Naive thymus-derived CD4-positive, alpha-beta T cell (primary cell): ENCODE measurements at regions of chrX and their contacts with region 1.

Region 1: GRCh38 chrX:47384502-47384901 is 14.1 kb downstream of the ZNF157 start:
- DNase-seq: peak; percentile 27 to 83 (median 67)
- ATAC-seq: peak; percentile 86
- H3K4me3 ChIP-seq: no peak overlapping the region
- H3K4me3 Mint-ChIP-seq: peak overlapping the region in 3 of 10 donors; percentile 31 to 39 (median 37)
- H3K27ac ChIP-seq: no peak overlapping the region
- H3K27ac Mint-ChIP-seq: peak overlapping the region in 3 of 9 donors; percentile 45 to 73 (median 67)
- H3K4me1 ChIP-seq: peaks cover 4 to 10% of the 10 kb centered on the region in 2 donors
- H3K4me1 Mint-ChIP-seq: peaks cover 11 to 39% (median 31%) of the 10 kb centered on the region in 7 donors
- H3K27me3 ChIP-seq: no peaks in the 10 kb centered on the region
- H3K27me3 Mint-ChIP-seq: no peaks in the 10 kb centered on the region

Region 2: GRCh38 chrX:47093248-47093647 is 291.3 kb before region 1 on chrX:
- CTCF ChIA-PET with region 1: no interaction called
- POLR2A ChIA-PET with region 1: no interaction called
- intact Hi-C with region 1: loop called in 1 of 2 experiments (anchors 10 kb)
- DNase-seq: peak in 4 of 9 donors; percentile 1 to 19 (median 15)
- ATAC-seq: no peak
- H3K4me3 ChIP-seq: no peak overlapping the region
- H3K4me3 Mint-ChIP-seq: no peak overlapping the region
- H3K27ac ChIP-seq: no peak overlapping the region
- H3K27ac Mint-ChIP-seq: no peak overlapping the region
- H3K4me1 ChIP-seq: no peaks in the 10 kb centered on the region
- H3K4me1 Mint-ChIP-seq: peaks cover 0 to 17% (median 11%) of the 10 kb centered on the region in 7 donors
- H3K27me3 ChIP-seq: no peaks in the 10 kb centered on the region
- H3K27me3 Mint-ChIP-seq: no peaks in the 10 kb centered on the region

Region 3: DNA sequence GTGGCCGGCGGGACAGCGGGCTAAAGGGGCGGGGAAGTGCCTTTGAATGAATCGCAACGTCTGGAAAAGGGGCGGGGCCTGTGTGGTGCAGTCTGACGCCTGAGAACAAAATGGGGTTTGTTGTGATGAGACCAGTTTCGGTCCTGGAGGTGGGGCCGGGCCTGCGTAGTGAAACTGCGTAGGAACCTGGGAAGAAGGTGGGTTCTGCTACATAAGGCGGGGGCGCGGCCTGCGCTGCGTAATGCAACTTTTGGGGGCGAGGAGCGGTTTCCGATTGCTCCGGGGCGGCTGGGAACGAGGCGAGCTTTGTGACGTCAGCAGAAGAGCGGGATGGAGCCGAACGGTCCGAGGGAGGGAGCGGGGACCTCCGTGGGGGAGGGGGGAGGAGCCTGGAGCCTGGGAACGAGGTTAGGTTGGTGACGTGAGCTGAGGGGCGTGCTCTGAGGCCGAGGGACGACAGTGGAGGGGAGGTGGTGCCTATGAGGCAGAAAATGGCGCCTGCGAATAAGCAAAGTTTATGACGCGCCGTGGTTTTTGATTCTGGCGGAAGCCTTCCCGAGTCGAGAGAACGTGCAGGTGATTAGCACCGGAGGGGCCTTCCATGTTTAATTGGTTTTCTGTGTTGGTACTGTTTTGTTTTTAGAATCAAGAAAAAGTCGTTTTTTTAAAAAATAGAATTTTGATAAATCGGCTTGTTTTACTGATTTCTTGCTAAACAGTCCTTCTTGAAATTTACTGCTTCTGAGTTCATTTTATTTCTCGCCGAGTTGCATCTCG is 151.0 kb before region 1 on chrX:
- CTCF ChIA-PET with region 1: interaction called, 4 read pairs
- POLR2A ChIA-PET with region 1: interaction called, 10 read pairs
- intact Hi-C with region 1: loop called (anchors 1 to 5 kb)
- DNase-seq: peak; percentile 71 to 97 (median 94)
- ATAC-seq: peak; percentile 92
- H3K4me3 ChIP-seq: peak overlapping the region; percentile 74
- H3K4me3 Mint-ChIP-seq: peak overlapping the region; percentile 84 to 98 (median 90)
- H3K27ac ChIP-seq: peak overlapping the region; percentile 99
- H3K27ac Mint-ChIP-seq: peak overlapping the region; percentile 94 to 100 (median 98)
- H3K4me1 ChIP-seq: peaks cover 0 to 14% of the 10 kb centered on the region in 2 donors
- H3K4me1 Mint-ChIP-seq: peaks cover 8 to 49% (median 24%) of the 10 kb centered on the region in 7 donors
- H3K27me3 ChIP-seq: no peaks in the 10 kb centered on the region
- H3K27me3 Mint-ChIP-seq: peaks cover 0 to 4% (median 0%) of the 10 kb centered on the region in 5 donors

Region 4: GRCh38 chrX:47361538-47362511 is 22.7 kb before region 1 on chrX:
- CTCF ChIA-PET with region 1: interaction called, 3 read pairs
- POLR2A ChIA-PET with region 1: interaction called, 4 read pairs
- intact Hi-C with region 1: loop called in 1 of 2 experiments (anchors 1 kb)
- DNase-seq: peak in 3 of 9 donors; percentile 8 to 16 (median 10)
- ATAC-seq: peak; percentile 75
- H3K4me3 ChIP-seq: no peak overlapping the region
- H3K4me3 Mint-ChIP-seq: peak overlapping the region in 5 of 10 donors; percentile 3 to 29 (median 24)
- H3K27ac ChIP-seq: no peak overlapping the region
- H3K27ac Mint-ChIP-seq: peak overlapping the region in 4 of 9 donors; percentile 15 to 40 (median 31)
- H3K4me1 ChIP-seq: peaks cover 6 to 9% of the 10 kb centered on the region in 2 donors
- H3K4me1 Mint-ChIP-seq: peaks cover 10 to 48% (median 30%) of the 10 kb centered on the region in 7 donors
- H3K27me3 ChIP-seq: no peaks in the 10 kb centered on the region
- H3K27me3 Mint-ChIP-seq: no peaks in the 10 kb centered on the region

Region 5: DNA sequence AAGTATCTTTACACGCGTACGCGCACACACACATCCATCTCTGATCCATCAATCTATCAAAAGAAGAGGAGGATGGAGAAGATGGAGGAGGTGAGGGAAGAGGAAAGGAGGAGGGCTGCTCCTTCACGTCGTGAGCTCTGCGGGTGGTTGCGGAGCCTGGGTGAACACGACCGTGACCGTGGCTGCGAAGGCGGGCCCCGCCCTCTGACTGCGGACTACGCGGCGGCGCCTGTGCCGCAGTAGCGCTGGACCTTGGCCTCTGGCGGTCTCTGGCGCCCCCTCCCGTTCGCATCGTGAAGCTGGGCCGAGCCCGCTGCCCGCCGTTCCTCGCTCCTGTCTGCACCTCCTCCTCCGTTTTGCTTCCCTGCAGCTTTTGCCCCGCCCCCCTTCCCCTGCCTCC is 138.8 kb after region 1 on chrX:
- CTCF ChIA-PET with region 1: interaction called, 13 read pairs
- POLR2A ChIA-PET with region 1: interaction called, 3 read pairs
- intact Hi-C with region 1: loop called (anchors 1 to 5 kb)
- DNase-seq: peak; percentile 50 to 85 (median 66)
- ATAC-seq: peak; percentile 99
- H3K4me3 ChIP-seq: peak overlapping the region; percentile 43
- H3K4me3 Mint-ChIP-seq: peak overlapping the region; percentile 66 to 82 (median 74)
- H3K27ac ChIP-seq: peak overlapping the region; percentile 3
- H3K27ac Mint-ChIP-seq: peak overlapping the region in 3 of 9 donors; percentile 42 to 47 (median 43)
- H3K4me1 ChIP-seq: no peaks in the 10 kb centered on the region
- H3K4me1 Mint-ChIP-seq: peaks cover 0 to 8% (median 0%) of the 10 kb centered on the region in 7 donors
- H3K27me3 ChIP-seq: no peaks in the 10 kb centered on the region
- H3K27me3 Mint-ChIP-seq: peaks cover 0 to 2% (median 0%) of the 10 kb centered on the region in 5 donors

Region 6: DNA sequence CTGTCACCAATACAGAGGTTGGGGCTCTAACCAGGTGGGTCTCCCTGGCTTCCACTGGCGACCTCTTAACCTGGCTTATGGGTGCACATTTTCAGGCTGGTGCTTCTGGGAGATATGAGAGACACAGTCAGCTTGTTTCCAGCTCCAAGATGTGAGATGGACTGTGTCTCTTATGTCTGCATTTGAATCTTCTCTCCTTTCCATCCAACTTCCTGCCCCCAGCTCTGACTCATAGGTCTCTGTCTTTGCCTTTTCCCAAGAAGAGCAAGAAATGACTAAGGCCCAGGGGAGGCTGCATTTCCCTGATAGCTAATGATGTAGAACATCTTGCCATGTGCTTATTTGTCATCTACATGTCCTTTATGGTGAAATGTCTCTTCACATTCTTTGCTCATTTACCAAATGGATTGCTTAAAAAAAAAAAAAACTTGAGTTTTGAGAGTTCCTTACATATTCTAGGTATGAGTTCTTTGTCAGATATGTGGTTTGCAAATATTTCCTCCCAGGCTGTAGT is 277.7 kb after region 1 on chrX:
- CTCF ChIA-PET with region 1: no interaction called
- POLR2A ChIA-PET with region 1: no interaction called
- intact Hi-C with region 1: no loop called
- DNase-seq: peak in 1 of 9 donors; percentile 37
- ATAC-seq: no peak
- H3K4me3 ChIP-seq: no peak overlapping the region
- H3K4me3 Mint-ChIP-seq: peak overlapping the region in 1 of 10 donors; percentile 17
- H3K27ac ChIP-seq: no peak overlapping the region
- H3K27ac Mint-ChIP-seq: peak overlapping the region in 1 of 9 donors; percentile 86
- H3K4me1 ChIP-seq: peaks cover 4 to 8% of the 10 kb centered on the region in 2 donors
- H3K4me1 Mint-ChIP-seq: peaks cover 0 to 21% (median 12%) of the 10 kb centered on the region in 7 donors
- H3K27me3 ChIP-seq: no peaks in the 10 kb centered on the region
- H3K27me3 Mint-ChIP-seq: peaks cover 0 to 1% (median 0%) of the 10 kb centered on the region in 5 donors